Right ventricle myocardium superior (tissue), 1 donor: ENCODE measurements at regions of chr4 and their contacts with region 1.

Region 1: DNA sequence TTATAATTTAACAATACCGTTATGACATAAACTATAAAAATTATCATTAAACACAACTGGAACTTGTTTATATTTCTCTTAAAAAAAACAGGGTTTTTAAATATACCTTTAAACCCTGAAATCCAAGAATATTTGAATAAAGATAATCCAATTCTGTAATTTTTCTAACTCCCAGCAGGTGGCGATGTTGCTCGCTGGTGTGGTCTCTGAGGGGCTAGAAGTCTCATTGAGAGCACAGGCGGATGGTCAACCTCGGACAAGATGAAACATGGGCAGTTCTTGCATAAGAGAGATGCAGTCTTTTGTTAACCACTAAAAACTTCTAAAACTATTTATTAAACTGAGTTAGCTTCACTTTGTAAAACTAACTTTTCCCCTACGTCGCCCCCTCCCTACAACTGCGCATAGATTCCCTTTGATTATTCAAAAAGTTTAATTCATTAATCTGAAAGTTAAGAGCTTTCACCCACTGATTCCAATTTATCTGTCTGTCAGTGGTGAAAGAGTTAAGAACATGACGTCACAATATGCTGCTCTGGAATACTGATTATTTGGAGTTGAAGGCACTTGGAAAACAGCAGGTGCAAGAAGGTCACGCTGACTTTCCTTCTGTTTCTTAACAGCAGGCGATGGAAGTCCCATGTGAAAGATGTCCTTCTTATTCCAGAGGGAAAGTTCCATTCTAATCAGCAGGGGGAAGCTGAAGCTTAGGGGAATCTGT is 29.5 kb downstream of the DMP1 start:
- DNase-seq: peak; percentile 56
- ATAC-seq: peak; percentile 90

Region 2: GRCh38 chr4:87781569-87781968 is 102.0 kb after region 1 on chr4:
- intact Hi-C with region 1: no loop called
- DNase-seq: no peak
- ATAC-seq: no peak

Region 3: DNA sequence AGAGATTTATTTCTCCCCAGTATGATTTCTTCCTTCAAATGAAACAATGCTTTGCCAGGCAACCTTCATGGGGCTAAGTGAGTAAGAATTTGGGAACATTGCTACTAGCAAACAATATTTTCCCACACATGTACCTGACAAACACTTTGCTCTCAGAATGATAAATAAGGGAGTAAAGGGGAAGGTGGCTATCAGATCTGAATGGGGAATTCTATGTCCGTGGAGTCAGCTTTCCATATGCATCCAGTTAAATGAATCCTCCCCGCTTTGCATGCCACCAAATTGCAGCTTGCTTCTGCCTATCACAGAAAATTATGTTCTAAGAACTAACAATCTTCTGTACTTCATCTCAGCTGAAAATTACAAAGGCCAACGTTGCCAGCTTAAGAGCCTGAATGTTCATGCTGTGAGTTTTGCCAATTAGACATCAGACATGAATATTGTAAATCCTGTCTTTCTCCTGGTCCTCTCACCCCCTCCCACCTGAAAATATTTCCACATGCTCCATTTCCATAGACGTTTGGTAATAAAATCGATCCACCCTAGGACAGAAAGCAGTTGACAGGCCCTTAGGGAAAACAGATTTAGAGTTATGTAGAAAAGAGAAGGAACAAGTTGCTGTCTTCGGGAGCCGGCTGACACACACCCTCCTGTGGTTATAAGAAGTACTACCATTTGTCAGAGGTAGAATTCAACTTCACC is 159.4 kb after region 1 on chr4:
- intact Hi-C with region 1: loop called (anchors 2 kb)
- DNase-seq: peak; percentile 43
- ATAC-seq: peak; percentile 79

Region 4: DNA sequence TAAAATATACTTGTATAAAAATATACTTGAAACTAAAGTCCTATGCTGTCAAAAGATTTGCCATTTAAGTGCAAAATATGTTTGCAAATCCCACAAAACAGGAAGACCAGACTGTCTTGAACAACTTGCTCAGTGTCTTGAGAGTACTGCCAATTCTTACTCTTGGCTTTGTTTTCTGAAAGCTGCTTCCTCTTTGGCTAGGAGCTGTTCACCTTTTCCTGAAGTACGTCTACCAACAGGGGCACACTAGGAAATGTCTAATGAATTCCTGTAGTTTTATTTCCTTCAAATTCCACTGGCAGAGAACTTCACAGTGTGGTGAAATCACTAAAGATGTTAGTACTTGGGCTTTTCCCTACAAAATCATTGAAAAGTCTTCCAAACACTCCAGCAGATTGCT is 525.3 kb after region 1 on chr4:
- intact Hi-C with region 1: loop called (anchors 10 kb)
- DNase-seq: no peak
- ATAC-seq: no peak